Common myeloid progenitor, CD34-positive (primary cell): ENCODE measurements at regions of chr4 and their contacts with region 1.

Region 1: DNA sequence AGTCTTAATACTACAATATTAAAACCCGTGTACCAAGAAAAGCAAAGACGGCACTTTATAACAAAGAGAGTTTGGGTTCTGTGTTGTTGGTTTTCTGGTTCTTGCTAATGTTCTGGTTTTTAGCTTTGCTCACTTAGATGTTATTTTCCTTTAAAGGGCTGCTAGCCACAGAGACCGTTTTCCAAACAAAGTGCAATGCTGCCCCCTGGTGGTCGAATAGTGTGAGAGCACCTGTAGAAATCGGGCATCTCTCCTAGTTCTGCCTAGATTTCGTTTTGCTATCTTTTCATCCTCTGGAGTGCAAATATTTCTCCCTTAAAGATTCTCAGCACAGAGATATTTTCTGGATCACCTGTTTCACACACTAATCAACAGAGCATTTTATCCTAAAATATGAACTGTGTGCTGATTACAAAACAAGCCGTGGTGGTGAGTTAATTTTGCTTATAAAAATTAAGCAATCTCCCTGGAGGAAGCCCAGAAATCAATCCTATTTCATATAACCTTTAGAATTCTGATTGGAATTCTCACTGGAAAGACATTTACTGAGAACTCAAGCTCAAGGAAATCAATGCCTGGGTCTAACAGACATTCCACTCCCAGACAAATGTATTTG is 334.5 kb upstream of the NOCT start:
- DNase-seq: peak; percentile 58 to 82 (median 72)
- H3K4me3 ChIP-seq: no peak overlapping the region
- H3K27ac ChIP-seq: no peak overlapping the region
- H3K4me1 ChIP-seq: no peaks in the 10 kb centered on the region
- H3K27me3 ChIP-seq: peaks cover 3 to 14% (median 9%) of the 10 kb centered on the region in 5 experiments

Region 2: DNA sequence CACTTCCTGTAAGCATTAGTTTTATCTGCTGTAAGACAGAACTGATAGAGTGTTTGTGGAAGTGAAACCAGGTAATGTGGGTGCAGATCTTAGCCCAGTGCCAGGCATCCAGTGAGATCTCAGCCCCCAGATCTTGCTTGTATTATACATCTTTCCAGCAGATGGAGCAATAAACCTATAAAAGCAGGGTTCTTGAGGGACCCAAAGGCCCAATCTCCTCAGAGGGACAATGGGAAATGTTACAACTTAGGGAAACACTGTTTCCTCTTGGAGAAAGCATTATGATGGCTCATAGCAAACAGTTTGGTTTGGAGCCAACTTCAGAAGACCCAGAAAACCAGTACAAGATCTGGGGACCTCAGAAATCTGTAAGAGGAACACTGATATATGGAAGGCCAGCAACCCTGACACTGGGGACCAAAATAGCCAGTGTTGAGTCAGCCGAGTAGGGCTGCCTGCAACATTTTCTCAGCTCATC is 645.3 kb before region 1 on chr4:
- CTCF ChIA-PET with region 1: interaction called, 28 read pairs
- POLR2A ChIA-PET with region 1: no interaction called
- DNase-seq: peak; percentile 25 to 51 (median 48)
- H3K4me3 ChIP-seq: no peak overlapping the region
- H3K27ac ChIP-seq: no peak overlapping the region
- H3K4me1 ChIP-seq: peaks cover 0 to 2% (median 0%) of the 10 kb centered on the region in 4 experiments
- H3K27me3 ChIP-seq: no peaks in the 10 kb centered on the region

Region 3: DNA sequence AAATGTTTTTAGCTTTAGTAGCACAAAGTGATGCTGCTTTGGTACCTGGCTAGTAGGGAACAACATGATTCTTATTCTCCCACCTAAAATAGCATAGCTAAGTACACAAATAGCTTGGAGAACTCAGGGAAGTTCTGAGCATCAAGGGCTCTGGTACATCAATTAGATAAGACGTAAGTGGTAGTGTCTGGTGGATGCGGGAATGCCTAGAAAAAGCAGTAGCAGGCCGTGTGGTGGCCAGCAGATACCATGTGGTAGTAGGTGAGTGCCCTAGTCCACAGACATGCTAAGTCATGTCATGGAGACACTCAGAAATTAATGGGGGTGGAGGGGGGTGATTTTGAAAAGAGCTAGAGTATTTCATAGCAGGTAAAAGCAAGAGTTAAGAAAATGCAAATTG is 12.8 kb before region 1 on chr4:
- CTCF ChIA-PET with region 1: interaction called, 10 read pairs
- POLR2A ChIA-PET with region 1: no interaction called
- DNase-seq: no peak
- H3K4me3 ChIP-seq: no peak overlapping the region
- H3K27ac ChIP-seq: no peak overlapping the region
- H3K4me1 ChIP-seq: no peaks in the 10 kb centered on the region
- H3K27me3 ChIP-seq: peaks cover 0 to 4% (median 0%) of the 10 kb centered on the region in 5 experiments

Region 4: GRCh38 chr4:138692411-138693034 is 11.4 kb after region 1 on chr4:
- CTCF ChIA-PET with region 1: interaction called, 10 read pairs
- POLR2A ChIA-PET with region 1: no interaction called
- DNase-seq: no peak
- H3K4me3 ChIP-seq: no peak overlapping the region
- H3K27ac ChIP-seq: no peak overlapping the region
- H3K4me1 ChIP-seq: peaks cover 0 to 6% (median 0%) of the 10 kb centered on the region in 4 experiments
- H3K27me3 ChIP-seq: peaks cover 0 to 2% (median 0%) of the 10 kb centered on the region in 5 experiments

Region 5: GRCh38 chr4:138870737-138871554 is 189.8 kb after region 1 on chr4:
- CTCF ChIA-PET with region 1: interaction called, 14 read pairs
- POLR2A ChIA-PET with region 1: no interaction called
- DNase-seq: peak; percentile 55 to 77 (median 64)
- H3K4me3 ChIP-seq: no peak overlapping the region
- H3K27ac ChIP-seq: no peak overlapping the region
- H3K4me1 ChIP-seq: no peaks in the 10 kb centered on the region
- H3K27me3 ChIP-seq: peaks cover 0 to 6% (median 0%) of the 10 kb centered on the region in 5 experiments